ENCODE measurements at regions of chr3 and their contacts with region 1.

Region 1: GRCh38 chr3:188584162-188584529 is 430.2 kb downstream of the LPP start:
- DNase-seq: no peak
- H3K4me3 Mint-ChIP-seq: no peak overlapping the region
- H3K27ac Mint-ChIP-seq: no peak overlapping the region
- H3K4me1 Mint-ChIP-seq: peaks cover 14% of the 10 kb centered on the region
- H3K27me3 Mint-ChIP-seq: no peaks in the 10 kb centered on the region

Region 2: GRCh38 chr3:188339410-188340295 is 244.5 kb before region 1 on chr3:
- intact Hi-C with region 1: loop called (anchors 5 kb)
- DNase-seq: peak; percentile 81
- H3K4me3 Mint-ChIP-seq: peak overlapping the region; percentile 66
- H3K27ac Mint-ChIP-seq: peak overlapping the region; percentile 93
- H3K4me1 Mint-ChIP-seq: peaks cover 34% of the 10 kb centered on the region
- H3K27me3 Mint-ChIP-seq: peaks cover 6% of the 10 kb centered on the region

Region 3: GRCh38 chr3:188720636-188721035 is 136.5 kb after region 1 on chr3:
- intact Hi-C with region 1: loop called (anchors 10 kb)
- DNase-seq: no peak
- H3K4me3 Mint-ChIP-seq: no peak overlapping the region
- H3K27ac Mint-ChIP-seq: no peak overlapping the region
- H3K4me1 Mint-ChIP-seq: peaks cover 13% of the 10 kb centered on the region
- H3K27me3 Mint-ChIP-seq: peaks cover 4% of the 10 kb centered on the region